ENCODE measurements at regions of chr12 and their contacts with region 1.

Region 1: GRCh38 chr12:68140556-68140955 is 19.0 kb downstream of the IFNG start:
- DNase-seq: peak; percentile 14
- H3K4me3 ChIP-seq: no peak overlapping the region
- H3K27ac ChIP-seq: no peak overlapping the region
- H3K4me1 ChIP-seq: no peaks in the 10 kb centered on the region
- H3K27me3 ChIP-seq: no peaks in the 10 kb centered on the region
- CTCF ChIP-seq: no peak

Region 2: DNA sequence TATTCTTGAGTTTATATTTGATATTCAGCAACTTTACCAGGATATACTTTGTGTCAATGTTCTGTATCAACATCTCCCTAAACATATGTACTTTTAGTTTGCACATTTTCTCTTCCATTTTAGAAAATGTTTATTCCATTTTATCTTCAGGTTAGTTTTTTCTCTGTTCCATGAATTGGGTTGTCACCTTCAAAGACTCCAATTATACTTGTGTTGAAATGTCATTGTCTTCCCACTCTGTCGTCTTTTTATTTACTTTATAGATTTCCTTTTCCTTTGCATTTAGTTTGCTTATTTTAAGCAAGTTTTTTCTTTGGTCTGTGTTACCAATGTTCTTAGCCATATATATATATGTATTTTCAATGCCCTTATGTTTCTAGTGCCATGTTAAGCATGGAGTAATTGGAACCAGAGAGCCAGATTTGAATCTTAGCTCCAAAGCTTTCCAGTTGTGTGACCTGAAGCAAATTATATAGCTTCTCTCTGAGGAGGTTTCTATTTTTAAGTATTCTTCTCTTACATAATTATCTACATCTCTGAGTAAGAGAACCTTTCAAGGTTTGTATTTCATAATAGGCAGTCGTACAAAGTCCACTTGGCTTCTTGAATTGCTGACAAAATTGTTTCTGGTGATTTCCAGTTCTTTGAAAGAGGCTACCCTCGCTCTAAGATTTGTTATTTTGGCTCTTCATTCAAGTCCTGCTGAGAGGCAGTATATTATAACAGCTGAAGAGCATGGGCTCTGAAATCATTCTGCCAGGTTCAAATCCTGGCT is 577.9 kb before region 1 on chr12:
- CTCF ChIA-PET with region 1: no interaction called
- POLR2A ChIA-PET with region 1: no interaction called
- intact Hi-C with region 1: loop called (anchors 10 kb)
- DNase-seq: no peak
- H3K4me3 ChIP-seq: no peak overlapping the region
- H3K27ac ChIP-seq: no peak overlapping the region
- H3K4me1 ChIP-seq: no peaks in the 10 kb centered on the region
- H3K27me3 ChIP-seq: no peaks in the 10 kb centered on the region
- CTCF ChIP-seq: no peak